ENCODE measurements at regions of chr12 and their contacts with region 1.

Region 1: DNA sequence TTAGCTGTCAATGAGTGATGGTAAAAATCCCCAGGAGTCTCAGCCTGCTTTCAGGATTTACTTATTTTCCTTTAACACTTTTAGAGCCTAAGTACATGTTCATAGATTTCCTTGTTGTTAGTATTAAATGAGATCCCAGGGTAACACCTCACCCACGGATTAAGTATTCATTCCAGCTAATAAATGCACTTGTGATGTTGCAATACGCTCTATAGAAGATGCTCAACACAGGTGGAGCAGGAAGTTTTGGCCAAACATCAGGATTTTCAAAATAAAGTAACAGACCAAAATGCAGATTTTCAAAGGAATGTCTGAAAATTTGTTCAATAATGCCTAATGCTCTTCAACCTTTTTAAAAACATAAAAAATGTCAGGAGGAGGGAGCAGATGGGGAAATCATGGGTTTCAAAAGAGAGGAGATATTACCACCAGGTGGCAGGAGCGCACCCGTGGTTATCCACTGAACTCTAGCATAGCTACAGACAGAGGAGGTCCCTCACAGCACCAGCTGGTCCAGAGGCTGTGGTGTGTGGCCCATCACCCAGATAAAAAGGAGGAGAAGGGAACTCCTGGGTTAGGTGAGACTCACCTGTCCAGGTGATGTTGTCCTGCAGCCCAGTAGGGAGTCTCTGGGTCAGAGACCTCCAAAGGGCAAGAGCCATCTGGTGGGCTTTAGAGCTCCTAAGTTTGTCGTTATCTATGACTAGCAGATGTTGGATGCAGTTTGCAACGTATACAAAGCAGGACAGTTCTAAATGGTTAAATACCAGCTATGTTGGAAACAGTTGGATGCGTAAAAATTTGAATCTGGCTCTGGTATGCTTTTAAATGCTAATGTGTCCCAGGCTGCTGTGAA is 1158.4 kb upstream of the TMEM132C start:
- DNase-seq: peak; percentile 27 to 68
- ATAC-seq: peak; percentile 83

Region 2: GRCh38 chr12:127293507-127294310 is 185.1 kb after region 1 on chr12:
- intact Hi-C with region 1: loop called in 1 of 2 experiments (anchors 5 kb)
- DNase-seq: peak in 1 of 2 donors; percentile 59
- ATAC-seq: peak; percentile 94

Region 3: GRCh38 chr12:127381048-127381668 is 272.6 kb after region 1 on chr12:
- intact Hi-C with region 1: loop called in 1 of 2 experiments (anchors 5 kb)
- DNase-seq: peak in 1 of 2 donors; percentile 34
- ATAC-seq: peak; percentile 66